GM12878 (cell line): ENCODE measurements at regions of chr14 and their contacts with region 1.

Region 1: GRCh38 chr14:87615822-87616679 is 376.9 kb downstream of the GALC start:
- DNase-seq: no peak
- ATAC-seq: peak; percentile 89
- H3K4me3 ChIP-seq: no peak overlapping the region
- H3K27ac ChIP-seq: no peak overlapping the region
- H3K4me1 ChIP-seq: no peaks in the 10 kb centered on the region
- H3K27me3 ChIP-seq: no peaks in the 10 kb centered on the region
- CTCF ChIP-seq: peak; percentile 69 to 75 (median 73); a peak in 5 of 6 replicates
- EP300 ChIP-seq: no peak
- POLR2A ChIP-seq: no peak
- RAD21 ChIP-seq: peak; percentile 72

Region 2: GRCh38 chr14:86902176-86902950 is 713.7 kb before region 1 on chr14:
- CTCF ChIA-PET with region 1: no interaction called
- POLR2A ChIA-PET with region 1: no interaction called
- RAD21 ChIA-PET with region 1: no interaction called
- SMC1A ChIA-PET with region 1: no interaction called
- in situ Hi-C with region 1: no loop called
- intact Hi-C with region 1: loop called (anchors 10 kb)
- DNase-seq: no peak
- ATAC-seq: no peak
- H3K4me3 ChIP-seq: no peak overlapping the region
- H3K27ac ChIP-seq: no peak overlapping the region
- H3K4me1 ChIP-seq: no peaks in the 10 kb centered on the region
- H3K27me3 ChIP-seq: no peaks in the 10 kb centered on the region
- CTCF ChIP-seq: no peak
- EP300 ChIP-seq: no peak
- POLR2A ChIP-seq: no peak
- RAD21 ChIP-seq: no peak

Region 3: GRCh38 chr14:87113286-87113685 is 502.8 kb before region 1 on chr14:
- CTCF ChIA-PET with region 1: interaction called, 4 read pairs
- POLR2A ChIA-PET with region 1: no interaction called
- RAD21 ChIA-PET with region 1: no interaction called
- SMC1A ChIA-PET with region 1: interaction called, 6 read pairs
- in situ Hi-C with region 1: no loop called
- intact Hi-C with region 1: loop called (anchors 10 kb)
- DNase-seq: no peak
- ATAC-seq: no peak
- H3K4me3 ChIP-seq: no peak overlapping the region
- H3K27ac ChIP-seq: no peak overlapping the region
- H3K4me1 ChIP-seq: no peaks in the 10 kb centered on the region
- H3K27me3 ChIP-seq: no peaks in the 10 kb centered on the region
- CTCF ChIP-seq: no peak
- EP300 ChIP-seq: no peak
- POLR2A ChIP-seq: no peak
- RAD21 ChIP-seq: no peak

Region 4: DNA sequence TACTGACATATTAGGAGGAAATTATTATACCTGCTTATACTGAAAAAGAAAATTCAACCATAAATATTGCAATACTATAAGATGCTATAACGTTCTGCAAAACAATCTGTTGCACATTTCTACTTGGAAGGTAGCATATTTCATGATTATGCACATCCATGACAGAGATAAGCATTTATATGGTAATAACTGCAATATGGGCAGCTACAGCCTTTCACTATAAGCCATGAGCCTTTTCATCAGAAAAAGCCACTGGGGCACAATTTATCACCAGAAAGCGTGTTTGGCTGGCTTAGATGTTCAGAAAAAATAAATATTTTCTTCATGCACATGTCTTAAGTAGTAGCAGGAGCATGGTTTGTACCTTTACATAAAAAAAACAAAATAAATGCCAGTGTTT is 36.2 kb after region 1 on chr14:
- CTCF ChIA-PET with region 1: no interaction called
- POLR2A ChIA-PET with region 1: no interaction called
- RAD21 ChIA-PET with region 1: no interaction called
- SMC1A ChIA-PET with region 1: no interaction called
- in situ Hi-C with region 1: no loop called
- intact Hi-C with region 1: no loop called
- DNase-seq: no peak
- ATAC-seq: no peak
- H3K4me3 ChIP-seq: no peak overlapping the region
- H3K27ac ChIP-seq: no peak overlapping the region
- H3K4me1 ChIP-seq: no peaks in the 10 kb centered on the region
- H3K27me3 ChIP-seq: no peaks in the 10 kb centered on the region
- CTCF ChIP-seq: no peak
- EP300 ChIP-seq: no peak
- POLR2A ChIP-seq: no peak
- RAD21 ChIP-seq: no peak

Region 5: GRCh38 chr14:87725318-87725717 is 109.3 kb after region 1 on chr14:
- CTCF ChIA-PET with region 1: no interaction called
- POLR2A ChIA-PET with region 1: no interaction called
- RAD21 ChIA-PET with region 1: no interaction called
- SMC1A ChIA-PET with region 1: no interaction called
- in situ Hi-C with region 1: no loop called
- intact Hi-C with region 1: no loop called
- DNase-seq: no peak
- ATAC-seq: no peak
- H3K4me3 ChIP-seq: no peak overlapping the region
- H3K27ac ChIP-seq: no peak overlapping the region
- H3K4me1 ChIP-seq: no peaks in the 10 kb centered on the region
- H3K27me3 ChIP-seq: no peaks in the 10 kb centered on the region
- CTCF ChIP-seq: no peak
- EP300 ChIP-seq: no peak
- POLR2A ChIP-seq: no peak
- RAD21 ChIP-seq: no peak